Panc1 (cell line): ENCODE measurements at regions of chr22 and their contacts with region 1.

Region 1: GRCh38 chr22:37924386-37925065 is 18.4 kb downstream of the MICALL1 start:
- DNase-seq: no peak
- ATAC-seq: no peak
- H3K4me3 ChIP-seq: no peak overlapping the region
- H3K27ac ChIP-seq: no peak overlapping the region
- H3K4me1 ChIP-seq: no peaks in the 10 kb centered on the region
- H3K27me3 ChIP-seq: no peaks in the 10 kb centered on the region
- CTCF ChIP-seq: no peak

Region 2: GRCh38 chr22:37880668-37881440 is 43.7 kb before region 1 on chr22:
- CTCF ChIA-PET with region 1: no interaction called
- POLR2A ChIA-PET with region 1: interaction called, 16 read pairs
- in situ Hi-C with region 1: no loop called
- intact Hi-C with region 1: no loop called
- DNase-seq: no peak
- ATAC-seq: no peak
- H3K4me3 ChIP-seq: no peak overlapping the region
- H3K27ac ChIP-seq: no peak overlapping the region
- H3K4me1 ChIP-seq: no peaks in the 10 kb centered on the region
- H3K27me3 ChIP-seq: no peaks in the 10 kb centered on the region
- CTCF ChIP-seq: no peak